HAP-1 (cell line): ENCODE measurements at regions of chr1 and their contacts with region 1.

Region 1: DNA sequence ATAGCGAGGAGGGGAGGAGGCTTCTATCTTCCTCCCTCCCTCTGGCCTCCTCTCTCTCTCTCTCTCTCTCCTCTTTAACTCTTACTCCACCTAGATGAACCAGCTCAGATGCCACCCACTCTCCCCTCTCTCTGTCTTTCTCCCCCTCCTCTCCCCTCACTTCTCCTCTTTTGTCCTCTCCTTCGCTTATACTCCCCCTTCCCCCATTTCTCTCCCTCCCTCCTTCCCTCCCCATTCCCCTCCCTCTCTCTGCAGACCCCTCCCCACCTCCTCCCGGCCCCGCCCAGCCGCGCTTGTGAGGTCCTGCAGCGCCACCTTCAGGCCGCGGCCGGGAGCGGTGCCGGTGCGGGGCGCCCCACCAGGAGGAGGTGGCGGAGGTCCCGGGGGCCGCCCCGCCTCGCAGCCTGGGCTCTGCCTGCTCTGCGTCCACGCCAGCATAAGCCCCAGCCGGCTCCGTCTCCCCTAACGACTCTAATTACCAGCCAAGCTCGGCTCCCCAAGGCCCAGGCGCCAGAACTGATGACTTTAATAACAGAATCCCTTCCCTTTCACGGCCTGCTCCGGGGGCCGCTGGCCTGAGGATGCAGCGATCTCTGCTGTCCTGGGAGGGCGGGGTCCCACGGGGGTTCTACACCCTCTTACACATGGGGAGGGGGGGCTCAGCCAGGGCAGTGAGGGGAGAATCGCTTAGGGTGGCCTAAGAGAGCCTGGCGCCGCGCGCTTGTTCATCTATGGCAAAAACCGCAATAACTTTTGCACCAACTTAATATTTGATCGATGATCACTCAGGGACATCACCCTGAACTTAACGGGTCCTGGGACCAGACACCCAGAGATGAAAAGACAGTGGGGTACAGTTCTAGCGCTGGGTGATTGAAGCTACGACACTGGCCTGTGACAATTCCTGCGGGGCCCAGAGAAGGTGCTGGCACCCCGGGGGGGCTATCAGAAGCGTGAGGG is 637.3 kb downstream of the MATN1 start:
- DNase-seq: peak; percentile 36 to 88
- H3K4me3 ChIP-seq: no peak overlapping the region
- H3K4me1 ChIP-seq: no peaks in the 10 kb centered on the region
- H3K27me3 ChIP-seq: peaks cover 3% of the 10 kb centered on the region; the same call in 1 of the 2 replicates

Region 2: DNA sequence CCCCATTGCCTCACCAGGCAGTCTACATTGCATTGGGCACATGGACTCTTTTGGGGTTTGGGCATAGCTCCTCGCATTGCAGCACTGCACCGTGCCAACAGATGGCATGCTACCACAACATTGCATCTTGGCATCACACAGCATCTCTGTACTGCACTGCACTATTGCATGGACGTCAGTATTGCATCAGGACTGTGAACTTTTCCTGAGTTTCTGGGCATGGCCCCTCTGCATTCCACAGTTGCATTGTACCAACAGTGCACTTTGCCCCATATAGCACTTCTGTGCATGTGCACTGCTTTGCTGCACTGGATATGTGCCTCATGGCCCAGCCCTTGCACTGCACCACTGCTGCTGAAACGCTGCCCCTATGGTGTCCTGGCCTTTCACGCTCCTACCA is 840.2 kb before region 1 on chr1:
- in situ Hi-C with region 1: loop called (anchors 10 kb)
- DNase-seq: no peak
- H3K4me3 ChIP-seq: no peak overlapping the region
- H3K4me1 ChIP-seq: peaks cover 8% of the 10 kb centered on the region; the same call in 1 of the 2 replicates
- H3K27me3 ChIP-seq: no peaks in the 10 kb centered on the region

Region 3: DNA sequence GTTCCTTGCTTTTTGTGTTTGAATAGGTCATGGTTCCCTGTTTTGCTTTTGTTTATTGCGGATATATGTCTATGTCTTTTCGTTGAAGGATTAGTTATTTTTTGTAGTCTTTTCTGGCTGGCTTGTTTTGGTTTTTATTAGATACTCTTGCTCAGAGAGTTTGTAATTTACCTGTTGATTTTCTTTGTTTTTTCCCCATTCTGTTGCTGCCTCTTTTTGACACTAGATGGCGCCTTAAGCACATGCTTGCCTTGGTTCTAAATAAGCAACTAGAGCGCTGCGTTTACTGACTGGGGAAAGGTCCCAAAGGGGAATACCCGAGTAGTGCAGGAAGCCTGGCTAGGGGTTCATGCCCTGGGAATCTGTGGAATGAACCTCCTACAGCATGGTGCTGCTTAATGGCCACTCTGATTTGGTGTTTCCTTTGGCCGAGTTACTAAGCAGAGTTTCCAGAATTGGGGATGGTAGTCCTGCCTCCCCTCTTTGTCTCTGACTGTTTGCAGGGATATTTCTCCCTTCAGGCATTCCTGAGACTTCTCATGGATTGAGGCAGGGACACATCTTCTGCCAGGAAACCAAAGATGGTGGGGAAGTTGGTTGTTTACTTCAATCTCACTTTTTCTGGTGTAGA is 706.5 kb before region 1 on chr1:
- in situ Hi-C with region 1: loop called (anchors 25 kb)
- DNase-seq: peak; percentile 44 to 62
- H3K4me3 ChIP-seq: no peak overlapping the region
- H3K4me1 ChIP-seq: no peaks in the 10 kb centered on the region
- H3K27me3 ChIP-seq: no peaks in the 10 kb centered on the region

Region 4: GRCh38 chr1:29793101-29793546 is 293.0 kb before region 1 on chr1:
- in situ Hi-C with region 1: loop called (anchors 25 kb)
- DNase-seq: peak; percentile 50 to 93
- H3K4me3 ChIP-seq: no peak overlapping the region
- H3K4me1 ChIP-seq: no peaks in the 10 kb centered on the region
- H3K27me3 ChIP-seq: 0 out of 2 replicates have a peak, but pooled peaks cover 3% of the 10 kb centered on the region